PC-3 (cell line): ENCODE measurements at regions of chr2 and their contacts with region 1.

Region 1: DNA sequence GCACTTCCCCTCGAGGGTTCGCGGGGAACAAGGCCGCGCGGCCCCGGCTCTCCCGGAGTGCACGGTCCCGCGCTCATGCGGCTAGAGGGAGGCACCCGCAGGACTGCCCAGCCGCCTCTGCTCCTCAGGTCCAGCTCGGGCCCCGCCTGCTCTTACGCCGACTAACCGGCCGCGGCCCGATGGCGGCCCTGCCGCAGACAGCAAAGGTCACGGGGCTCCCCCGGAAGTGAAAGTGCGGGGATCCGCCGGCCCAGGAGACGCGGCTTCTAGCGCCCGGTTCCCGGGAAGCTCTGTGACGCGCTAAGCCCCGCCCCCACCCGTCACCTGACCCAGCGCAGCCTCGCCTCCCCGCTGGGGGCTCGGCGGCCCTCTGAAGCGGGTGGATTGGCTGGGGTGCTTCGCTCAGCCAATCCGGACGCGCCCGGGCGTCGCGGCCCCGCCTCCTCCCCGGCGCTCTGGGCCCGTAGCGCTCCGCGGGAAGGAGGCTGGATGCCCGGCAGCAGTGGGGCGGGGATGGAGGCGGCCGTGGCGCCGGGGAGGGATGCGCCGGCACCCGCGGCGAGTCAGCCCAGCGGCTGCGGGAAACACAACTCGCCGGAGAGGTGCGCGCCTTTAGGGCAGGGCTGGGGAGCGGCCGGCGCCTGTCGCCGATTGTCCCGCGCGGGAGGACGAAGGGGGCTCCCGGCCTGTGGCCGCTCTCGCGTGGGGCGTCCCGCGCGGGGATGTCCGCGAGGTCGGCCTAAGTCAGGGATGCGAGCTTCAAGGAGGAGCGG is at the start of gene SCLY:
- DNase-seq: peak; percentile 97
- ATAC-seq: peak; percentile 96
- H3K4me3 ChIP-seq: peak within 1 kb of the TSS; percentile 93
- H3K27ac ChIP-seq: peak within 1 kb of the TSS; percentile 50
- H3K4me1 ChIP-seq: peaks cover 18% of the 10 kb centered on the region; the same call in 1 of the 2 replicates
- H3K27me3 ChIP-seq: no peaks in the 10 kb centered on the region
- CTCF ChIP-seq: no peak
- total RNA-seq, gene SCLY: 19.5 and 23.1 TPM in 2 replicates

Region 2: GRCh38 chr2:237483040-237483721 is 577.5 kb before region 1 on chr2:
- CTCF ChIA-PET with region 1: no interaction called
- POLR2A ChIA-PET with region 1: no interaction called
- intact Hi-C with region 1: no loop called
- DNase-seq: peak; percentile 85
- ATAC-seq: peak; percentile 67
- H3K4me3 ChIP-seq: 0 out of 2 replicates have a peak overlapping the region, but pooled peaks have one; percentile 3
- H3K27ac ChIP-seq: peak overlapping the region; percentile 98
- H3K4me1 ChIP-seq: peaks cover 40% of the 10 kb centered on the region
- H3K27me3 ChIP-seq: no peaks in the 10 kb centered on the region
- CTCF ChIP-seq: peak; percentile 44; the same call in 1 of the 2 replicates

Region 3: GRCh38 chr2:238042849-238043584 is 17.7 kb before region 1 on chr2:
- CTCF ChIA-PET with region 1: no interaction called
- POLR2A ChIA-PET with region 1: no interaction called
- intact Hi-C with region 1: no loop called
- DNase-seq: no peak
- ATAC-seq: no peak
- H3K4me3 ChIP-seq: no peak overlapping the region
- H3K27ac ChIP-seq: no peak overlapping the region
- H3K4me1 ChIP-seq: no peaks in the 10 kb centered on the region
- H3K27me3 ChIP-seq: no peaks in the 10 kb centered on the region
- CTCF ChIP-seq: no peak

Region 4: GRCh38 chr2:238106686-238107524 is 46.2 kb after region 1 on chr2:
- CTCF ChIA-PET with region 1: no interaction called
- POLR2A ChIA-PET with region 1: no interaction called
- intact Hi-C with region 1: loop called (anchors 2 kb)
- DNase-seq: peak; percentile 49
- ATAC-seq: peak; percentile 61
- H3K4me3 ChIP-seq: peak overlapping the region; percentile 65
- H3K27ac ChIP-seq: no peak overlapping the region
- H3K4me1 ChIP-seq: no peaks in the 10 kb centered on the region
- H3K27me3 ChIP-seq: no peaks in the 10 kb centered on the region
- CTCF ChIP-seq: peak; percentile 48

Region 5: GRCh38 chr2:238239872-238240751 is 179.4 kb after region 1 on chr2 and contains the start of gene HES6:
- CTCF ChIA-PET with region 1: no interaction called
- POLR2A ChIA-PET with region 1: interaction called, 18 read pairs
- intact Hi-C with region 1: no loop called
- DNase-seq: peak; percentile 89
- ATAC-seq: peak; percentile 87
- H3K4me3 ChIP-seq: peak within 1 kb of the TSS; percentile 70
- H3K27ac ChIP-seq: no peak within 1 kb of the TSS
- H3K4me1 ChIP-seq: peaks cover 4% of the 10 kb centered on the region; the same call in 1 of the 2 replicates
- H3K27me3 ChIP-seq: no peaks in the 10 kb centered on the region
- CTCF ChIP-seq: no peak
- total RNA-seq, gene HES6: 9.8 and 19.6 TPM in 2 replicates